A549 (cell line): ENCODE measurements at regions of chr13 and their contacts with region 1.

Region 1: DNA sequence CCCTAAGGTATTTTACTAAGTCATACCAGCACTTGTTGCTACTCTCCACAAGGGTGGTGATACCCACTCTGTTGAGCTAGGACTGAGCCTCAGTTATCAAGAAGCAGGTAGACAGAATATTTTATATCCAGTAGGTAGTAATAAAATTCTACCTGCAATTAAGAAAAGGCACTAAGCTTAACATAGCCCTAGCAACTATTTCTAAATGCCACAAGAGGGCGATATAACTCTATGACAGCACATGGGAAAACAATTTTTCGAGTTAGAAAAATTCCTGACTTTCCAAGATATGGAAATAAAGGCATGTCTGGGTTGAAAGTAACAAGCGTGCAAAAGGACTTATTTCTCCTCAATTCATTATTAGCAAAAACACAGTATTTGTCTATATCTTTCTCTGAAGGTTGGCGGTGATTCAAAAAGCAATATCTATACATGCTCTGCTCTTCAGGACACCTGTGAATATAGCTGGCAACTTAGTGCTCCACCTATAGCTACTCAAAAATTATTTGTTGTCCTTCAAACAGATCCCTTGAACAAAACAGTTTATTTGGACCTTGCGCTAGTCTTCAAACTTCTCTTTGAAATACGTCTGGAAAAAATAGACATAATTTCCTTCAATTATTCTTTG is 14.7 kb downstream of the CCDC169 start:
- DNase-seq: peak; percentile 3 to 23
- ATAC-seq: peak; percentile 54 to 74; a peak in 4 of 6 replicates
- H3K4me3 ChIP-seq: no peak overlapping the region
- H3K27ac ChIP-seq: no peak overlapping the region
- H3K4me1 ChIP-seq: no peaks in the 10 kb centered on the region
- CTCF ChIP-seq: peak; percentile 71
- EP300 ChIP-seq: no peak
- POLR2A ChIP-seq: no peak
- RAD21 ChIP-seq: peak; percentile 77

Region 2: DNA sequence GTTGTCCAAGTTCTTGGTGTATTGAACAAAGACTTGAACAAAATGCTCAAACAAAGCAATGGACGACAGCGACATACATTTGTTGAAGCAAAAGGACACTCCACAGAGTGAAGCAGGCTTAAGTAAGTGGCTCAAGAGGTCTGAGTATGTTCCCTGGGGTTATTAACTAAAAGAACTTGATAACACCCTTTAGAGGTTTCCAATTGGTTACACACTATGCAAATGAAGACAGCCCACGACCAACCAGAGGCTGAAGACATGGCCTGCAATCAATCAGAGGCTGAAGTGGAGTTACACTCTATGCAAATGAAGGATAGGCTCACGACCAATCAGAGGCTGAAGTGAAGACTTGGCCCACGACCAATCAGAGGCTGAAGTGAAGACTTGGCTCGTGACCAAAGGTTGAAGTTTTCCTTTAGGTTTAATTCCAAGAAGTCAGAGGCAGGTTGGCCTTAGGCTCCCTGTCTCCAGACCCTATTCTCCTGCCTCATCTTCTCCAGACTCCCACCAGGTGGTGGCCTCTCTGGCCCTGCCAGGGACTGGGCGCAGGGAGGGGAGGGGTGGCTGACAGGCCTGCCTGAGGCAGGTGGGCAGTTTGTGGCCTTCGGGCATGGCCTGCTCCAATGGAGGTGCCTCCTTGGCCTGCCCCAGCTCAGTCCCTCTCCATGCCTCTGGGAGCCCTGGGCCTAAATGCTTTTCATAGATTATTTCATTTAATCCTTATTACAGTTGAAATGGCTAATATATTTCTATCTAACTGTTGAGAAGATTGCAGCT is 23.4 kb before region 1 on chr13:
- CTCF ChIA-PET with region 1: no interaction called
- POLR2A ChIA-PET with region 1: no interaction called
- DNase-seq: no peak
- ATAC-seq: no peak
- H3K4me3 ChIP-seq: no peak overlapping the region
- H3K27ac ChIP-seq: no peak overlapping the region
- H3K4me1 ChIP-seq: no peaks in the 10 kb centered on the region
- CTCF ChIP-seq: no peak
- EP300 ChIP-seq: no peak
- POLR2A ChIP-seq: no peak
- RAD21 ChIP-seq: no peak

Region 3: GRCh38 chr13:36294096-36294495 is 11.2 kb after region 1 on chr13:
- CTCF ChIA-PET with region 1: interaction called, 11 read pairs
- POLR2A ChIA-PET with region 1: no interaction called
- DNase-seq: no peak
- ATAC-seq: no peak
- H3K4me3 ChIP-seq: no peak overlapping the region
- H3K27ac ChIP-seq: no peak overlapping the region
- H3K4me1 ChIP-seq: 0 out of 3 replicates have a peak, but pooled peaks cover 4% of the 10 kb centered on the region
- CTCF ChIP-seq: no peak
- EP300 ChIP-seq: no peak
- POLR2A ChIP-seq: no peak
- RAD21 ChIP-seq: no peak

Region 4: GRCh38 chr13:36736119-36736726 is 453.3 kb after region 1 on chr13:
- CTCF ChIA-PET with region 1: interaction called, 26 read pairs
- POLR2A ChIA-PET with region 1: no interaction called
- DNase-seq: peak; percentile 8 to 50
- ATAC-seq: no peak
- H3K4me3 ChIP-seq: no peak overlapping the region
- H3K27ac ChIP-seq: no peak overlapping the region
- H3K4me1 ChIP-seq: no peaks in the 10 kb centered on the region
- CTCF ChIP-seq: peak; percentile 51
- EP300 ChIP-seq: no peak
- POLR2A ChIP-seq: no peak
- RAD21 ChIP-seq: peak; percentile 41 to 44